Tibial artery (tissue), 4 donors: ENCODE measurements at regions of chr4 and their contacts with region 1.

Region 1: DNA sequence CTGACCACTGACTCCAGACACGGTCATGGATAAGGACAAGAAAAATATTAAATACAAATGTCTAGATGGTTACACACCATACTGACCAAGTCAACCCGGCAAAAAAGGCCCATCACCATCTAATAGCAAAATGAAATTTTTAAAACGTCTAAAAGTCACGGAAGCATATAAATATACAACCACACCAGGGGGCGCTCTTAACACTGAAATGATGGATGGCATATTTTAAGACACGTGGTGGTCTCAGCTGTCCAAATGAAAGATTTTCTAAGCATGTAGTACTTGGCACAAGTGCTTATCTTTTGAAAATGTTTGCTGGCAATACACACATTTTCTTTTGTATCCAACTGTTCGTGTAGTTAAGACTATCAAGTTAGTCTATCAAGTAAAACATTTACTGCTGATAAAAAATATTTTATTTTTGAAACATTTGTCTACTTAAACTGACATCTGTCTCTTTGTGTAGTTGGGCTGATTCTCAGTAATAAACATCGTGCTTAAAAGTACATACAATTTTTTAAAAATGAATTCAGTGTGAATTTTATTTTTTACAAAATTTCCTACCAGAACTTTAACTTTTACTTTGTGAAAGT is 64.6 kb downstream of the COX7B2 start:
- DNase-seq: peak in 1 of 2 donors; percentile 36
- H3K4me3 ChIP-seq: no peak overlapping the region
- H3K27ac ChIP-seq: no peak overlapping the region
- H3K4me1 ChIP-seq: peaks cover 0 to 6% (median 0%) of the 10 kb centered on the region in 4 donors
- H3K27me3 ChIP-seq: no peaks in the 10 kb centered on the region
- CTCF ChIP-seq: peak; percentile 64 to 76

Region 2: GRCh38 chr4:46830971-46831454 is 13.4 kb before region 1 on chr4:
- intact Hi-C with region 1: no loop called
- DNase-seq: no peak
- H3K4me3 ChIP-seq: no peak overlapping the region
- H3K27ac ChIP-seq: no peak overlapping the region
- H3K4me1 ChIP-seq: no peaks in the 10 kb centered on the region
- H3K27me3 ChIP-seq: no peaks in the 10 kb centered on the region
- CTCF ChIP-seq: no peak

Region 3: DNA sequence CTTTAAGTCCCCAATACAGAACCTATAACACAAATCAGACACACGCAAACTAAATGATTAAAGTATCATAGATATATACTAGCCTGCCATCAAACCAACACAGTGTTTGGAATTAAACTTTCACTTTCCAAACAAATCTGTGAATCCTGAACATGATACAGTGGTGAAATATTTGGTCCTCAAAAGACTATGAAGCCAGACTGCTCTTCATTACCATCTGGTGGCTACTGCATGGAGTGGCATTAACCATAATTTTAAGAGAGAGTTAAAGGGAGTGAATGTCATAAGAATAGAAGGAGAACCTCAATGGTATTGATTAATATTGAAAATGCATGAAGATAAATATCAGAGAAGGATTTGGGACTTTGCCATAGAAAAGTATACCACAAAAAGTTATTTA is 158.2 kb after region 1 on chr4:
- intact Hi-C with region 1: loop called (anchors 10 kb)
- DNase-seq: no peak
- H3K4me3 ChIP-seq: no peak overlapping the region
- H3K27ac ChIP-seq: no peak overlapping the region
- H3K4me1 ChIP-seq: no peaks in the 10 kb centered on the region
- H3K27me3 ChIP-seq: no peaks in the 10 kb centered on the region
- CTCF ChIP-seq: peak in 1 of 2 experiments; percentile 30

Region 4: DNA sequence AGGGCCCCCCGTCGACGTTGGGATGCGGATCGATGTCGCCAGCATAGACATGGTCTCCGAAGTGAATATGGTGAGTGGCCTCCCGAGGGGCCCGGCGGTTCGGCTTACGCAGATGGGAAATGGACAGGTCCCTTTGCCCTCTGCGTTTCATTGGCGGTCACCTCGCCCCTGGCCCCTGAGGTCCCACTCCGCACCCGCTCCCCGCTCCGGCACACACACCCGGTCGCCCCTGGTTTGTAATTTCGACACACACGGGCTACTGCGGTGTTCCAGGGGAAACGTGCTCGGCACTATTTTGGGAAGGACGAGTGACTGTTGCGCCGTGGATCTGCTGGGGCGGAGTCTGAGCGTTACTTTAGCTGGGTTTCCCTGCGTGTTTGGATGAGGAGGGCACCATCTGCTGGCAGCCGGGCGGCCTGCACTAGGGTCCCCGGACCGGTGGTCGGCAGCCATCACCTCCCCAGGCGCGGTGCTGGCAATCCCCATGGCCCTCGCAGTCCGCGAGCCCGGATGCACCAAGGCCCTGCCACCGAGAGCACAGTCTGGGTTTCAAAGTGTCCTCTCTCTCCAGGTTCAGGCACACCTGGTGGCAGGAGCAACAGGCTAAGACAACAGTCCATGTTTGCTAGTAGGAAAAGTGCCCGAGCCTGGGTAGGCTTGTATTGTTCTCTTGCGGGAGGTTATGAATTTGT is 188.1 kb after region 1 on chr4:
- intact Hi-C with region 1: loop called (anchors 10 kb)
- DNase-seq: peak; percentile 28 to 74
- H3K4me3 ChIP-seq: peak overlapping the region; percentile 51 to 53
- H3K27ac ChIP-seq: peak overlapping the region in 1 of 2 donors; percentile 38
- H3K4me1 ChIP-seq: peaks cover 0 to 18% (median 11%) of the 10 kb centered on the region in 4 donors
- H3K27me3 ChIP-seq: peaks cover 0 to 8% of the 10 kb centered on the region in 2 donors
- CTCF ChIP-seq: peak; percentile 52 to 55

Region 5: GRCh38 chr4:47383829-47384427 is 539.5 kb after region 1 on chr4:
- intact Hi-C with region 1: loop called (anchors 10 kb)
- DNase-seq: no peak
- H3K4me3 ChIP-seq: no peak overlapping the region
- H3K27ac ChIP-seq: no peak overlapping the region
- H3K4me1 ChIP-seq: no peaks in the 10 kb centered on the region
- H3K27me3 ChIP-seq: no peaks in the 10 kb centered on the region
- CTCF ChIP-seq: peak; percentile 41 to 49